ENCODE measurements at regions of chr9 and their contacts with region 1.

Region 1: GRCh38 chr9:26142631-26143030 is 464.4 kb upstream of the TUSC1 start:
- DNase-seq: no peak
- ATAC-seq: no peak
- H3K4me3 Mint-ChIP-seq: no peak overlapping the region
- H3K27ac Mint-ChIP-seq: no peak overlapping the region
- H3K4me1 Mint-ChIP-seq: no peaks in the 10 kb centered on the region
- H3K27me3 Mint-ChIP-seq: no peaks in the 10 kb centered on the region

Region 2: GRCh38 chr9:26175264-26175663 is 32.6 kb after region 1 on chr9:
- CTCF ChIA-PET with region 1: no interaction called
- POLR2A ChIA-PET with region 1: no interaction called
- intact Hi-C with region 1: loop called in 1 of 2 experiments (anchors 5 kb)
- DNase-seq: no peak
- ATAC-seq: no peak
- H3K4me3 Mint-ChIP-seq: no peak overlapping the region
- H3K27ac Mint-ChIP-seq: no peak overlapping the region
- H3K4me1 Mint-ChIP-seq: no peaks in the 10 kb centered on the region
- H3K27me3 Mint-ChIP-seq: no peaks in the 10 kb centered on the region